ENCODE measurements at regions of chr12 and their contacts with region 1.

Region 1: GRCh38 chr12:120249875-120250795 is 15.4 kb downstream of the PXN start:
- DNase-seq: no peak
- ATAC-seq: no peak
- H3K4me3 ChIP-seq: no peak overlapping the region
- H3K27ac ChIP-seq: peak overlapping the region; percentile 72
- H3K4me1 ChIP-seq: peaks cover 53 to 84% of the 10 kb centered on the region in 2 experiments
- H3K27me3 ChIP-seq: no peaks in the 10 kb centered on the region
- CTCF ChIP-seq: no peak
- POLR2A ChIP-seq: no peak
- RAD21 ChIP-seq: no peak

Region 2: GRCh38 chr12:120265473-120266179 is 15.5 kb after region 1 on chr12 and contains the start of gene PXN:
- CTCF ChIA-PET with region 1: interaction called, 8 read pairs
- POLR2A ChIA-PET with region 1: interaction called, 19 read pairs
- RAD21 ChIA-PET with region 1: no interaction called
- intact Hi-C with region 1: no loop called
- DNase-seq: peak; percentile 67
- ATAC-seq: peak; percentile 84
- H3K4me3 ChIP-seq: peak within 1 kb of the TSS; percentile 66 to 85
- H3K27ac ChIP-seq: peak within 1 kb of the TSS; percentile 93
- H3K4me1 ChIP-seq: peaks cover 41 to 55% of the 10 kb centered on the region in 2 experiments
- H3K27me3 ChIP-seq: no peaks in the 10 kb centered on the region
- CTCF ChIP-seq: peak in 2 of 3 experiments; percentile 73 to 80; a peak in 4 of 6 replicates
- POLR2A ChIP-seq: peak; percentile 14
- RAD21 ChIP-seq: no peak
- total RNA-seq, gene PXN: 211 TPM

Measured in HCT116 (cell line).